ENCODE measurements at regions of chr11 and their contacts with region 1.

Region 1: GRCh38 chr11:11787305-11788062 is 54.3 kb upstream of the USP47 start:
- DNase-seq: peak; percentile 53
- CTCF ChIP-seq: peak; percentile 83

Region 2: DNA sequence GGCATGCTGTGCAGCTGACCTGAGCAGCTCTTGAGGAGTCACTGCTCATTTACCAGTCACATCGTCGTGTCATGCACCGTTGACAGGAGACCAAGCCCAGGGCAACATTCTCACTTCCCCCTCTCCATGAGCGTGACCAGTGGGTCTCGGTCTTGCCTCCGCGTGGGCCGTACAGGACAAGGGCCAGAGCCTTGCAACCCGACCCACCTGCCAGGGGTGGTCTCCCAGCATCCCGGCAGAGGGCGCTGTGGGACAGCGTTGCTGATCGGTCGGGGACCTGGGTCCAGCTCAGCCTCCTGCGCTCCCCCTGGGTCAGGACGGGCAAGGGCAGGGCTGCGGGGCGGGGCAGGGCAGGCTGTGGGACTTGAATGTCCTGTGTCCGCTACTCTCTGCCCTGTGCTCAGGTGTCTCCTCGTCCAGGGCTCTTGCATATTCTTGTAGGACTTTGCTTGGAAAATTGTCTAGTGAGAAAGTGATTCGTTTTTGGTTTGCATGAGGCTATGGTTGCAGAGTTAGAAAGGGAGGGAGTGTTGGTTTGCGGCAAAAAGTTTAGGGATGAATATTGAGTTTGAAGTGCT is 995.0 kb before region 1 on chr11:
- in situ Hi-C with region 1: loop called (anchors 25 kb)
- DNase-seq: peak; percentile 90
- CTCF ChIP-seq: peak; percentile 97

Region 3: GRCh38 chr11:10933455-10934292 is 853.8 kb before region 1 on chr11:
- in situ Hi-C with region 1: loop called (anchors 25 kb)
- DNase-seq: peak; percentile 75
- CTCF ChIP-seq: peak; percentile 79

Region 4: GRCh38 chr11:11028017-11028692 is 759.3 kb before region 1 on chr11:
- in situ Hi-C with region 1: loop called (anchors 10 kb)
- DNase-seq: peak; percentile 44
- CTCF ChIP-seq: peak; percentile 78

Region 5: DNA sequence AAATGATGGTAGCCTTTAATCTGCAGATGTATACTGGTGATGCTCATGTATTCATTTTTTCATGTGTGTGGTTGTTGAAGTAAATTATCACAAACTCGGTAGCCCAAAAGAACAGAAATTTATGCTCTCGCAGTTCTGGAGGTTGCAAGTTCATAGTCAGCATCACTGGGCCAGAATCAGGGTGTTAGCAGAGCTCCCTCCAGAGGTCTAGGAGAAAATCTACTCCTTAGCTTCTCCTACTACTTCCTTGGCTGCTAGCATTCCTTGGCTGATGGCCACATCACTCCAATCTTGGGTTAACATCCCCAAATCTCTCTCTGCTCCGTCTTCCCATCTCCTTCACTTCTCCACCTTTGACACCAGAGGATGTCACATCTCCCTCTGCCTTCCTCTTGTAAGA is 120.4 kb before region 1 on chr11:
- in situ Hi-C with region 1: no loop called
- DNase-seq: no peak
- CTCF ChIP-seq: no peak

Region 6: DNA sequence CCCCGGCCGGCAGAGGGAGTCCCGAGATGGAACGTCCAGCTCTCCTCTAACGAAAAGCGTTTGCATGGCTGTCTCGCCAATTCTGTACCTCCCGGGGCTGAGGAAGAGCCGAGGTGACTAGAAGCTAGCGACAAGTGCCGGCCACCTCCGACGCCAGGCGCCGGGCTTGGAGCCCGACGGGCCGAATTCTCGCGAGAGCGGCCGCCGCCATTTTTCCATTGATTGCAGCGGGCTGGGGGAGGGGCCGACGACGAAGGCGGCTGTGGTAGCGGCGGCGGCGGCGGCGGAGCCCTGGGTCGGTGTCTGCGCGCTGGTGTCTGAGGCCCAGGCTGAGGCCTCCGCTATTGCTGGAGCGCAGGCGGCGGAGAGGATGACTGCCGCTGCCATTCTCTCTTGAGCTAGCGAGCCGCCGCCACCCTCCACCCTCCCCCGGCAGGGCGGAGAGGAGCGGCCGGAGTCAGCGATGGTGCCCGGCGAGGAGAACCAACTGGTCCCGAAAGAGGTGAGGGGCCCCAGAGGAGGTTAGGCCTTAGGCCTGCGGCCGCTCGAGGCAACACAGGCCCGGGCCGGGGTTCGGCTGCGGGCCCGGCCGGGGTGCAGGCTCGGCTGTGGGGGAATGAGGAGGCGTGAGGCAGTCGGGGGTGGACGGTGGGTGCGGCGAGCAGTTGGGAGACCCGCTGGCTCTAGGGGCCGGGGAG is 54.4 kb after region 1 on chr11 and contains the start of gene USP47:
- in situ Hi-C with region 1: no loop called
- DNase-seq: peak; percentile 88
- CTCF ChIP-seq: peak; percentile 30

Region 7: GRCh38 chr11:12137938-12138731 is 350.7 kb after region 1 on chr11:
- in situ Hi-C with region 1: no loop called
- DNase-seq: no peak
- CTCF ChIP-seq: no peak

Region 8: DNA sequence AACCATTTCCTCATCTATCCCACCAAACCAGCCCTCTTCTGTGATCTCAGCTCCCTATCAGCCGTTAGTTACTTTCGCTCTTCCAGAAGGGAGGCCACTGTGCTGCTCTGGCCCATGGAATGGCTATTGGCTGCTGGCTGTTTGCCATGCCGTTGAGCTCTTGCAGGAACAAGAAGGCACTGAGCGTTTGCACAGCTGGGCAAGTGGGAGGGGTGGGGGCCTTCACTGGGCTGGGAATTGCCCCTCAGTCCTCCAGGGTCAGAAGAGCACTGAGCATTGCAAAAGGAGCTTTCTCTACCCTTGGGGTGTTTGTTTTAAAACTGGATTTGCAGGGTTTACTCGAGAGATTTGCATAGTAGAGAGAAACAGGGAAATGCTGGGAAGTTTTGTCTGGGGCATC is 460.9 kb after region 1 on chr11:
- in situ Hi-C with region 1: no loop called
- DNase-seq: no peak
- CTCF ChIP-seq: no peak